Common myeloid progenitor, CD34-positive (primary cell): ENCODE measurements at regions of chr1 and their contacts with region 1.

Region 1: GRCh38 chr1:87292684-87293493 is 35.8 kb upstream of the LMO4 start:
- DNase-seq: peak; percentile 78 to 90 (median 85)
- H3K4me3 ChIP-seq: no peak overlapping the region
- H3K27ac ChIP-seq: no peak overlapping the region
- H3K4me1 ChIP-seq: no peaks in the 10 kb centered on the region
- H3K27me3 ChIP-seq: no peaks in the 10 kb centered on the region

Region 2: DNA sequence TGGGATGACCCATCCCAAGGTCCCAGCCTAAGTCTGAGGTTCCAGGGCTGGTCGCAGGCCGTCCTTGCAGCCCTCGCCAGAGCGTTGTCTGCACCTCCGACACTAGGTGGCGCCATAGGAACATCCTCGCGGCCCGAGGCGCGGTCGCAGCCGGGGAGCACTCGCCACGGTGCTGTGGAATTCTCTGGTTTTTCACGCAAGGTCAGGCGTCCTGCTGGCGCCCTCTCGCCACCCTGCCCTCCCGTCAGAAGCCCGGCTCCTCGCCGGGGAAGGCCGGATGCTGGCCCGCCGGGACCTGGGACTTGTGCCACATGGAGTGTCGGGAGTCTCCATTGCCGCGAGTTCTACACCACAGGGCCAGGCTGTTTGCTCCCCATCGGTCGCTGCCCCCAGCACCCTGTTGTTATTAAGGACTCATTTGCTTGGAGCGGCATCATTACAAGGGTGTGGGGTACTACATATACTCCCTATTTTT is 161.0 kb before region 1 on chr1:
- CTCF ChIA-PET with region 1: interaction called, 12 read pairs
- POLR2A ChIA-PET with region 1: no interaction called
- DNase-seq: peak; percentile 65 to 83 (median 81)
- H3K4me3 ChIP-seq: peak overlapping the region; percentile 36 to 86 (median 67)
- H3K27ac ChIP-seq: no peak overlapping the region
- H3K4me1 ChIP-seq: peaks cover 0 to 21% (median 12%) of the 10 kb centered on the region in 4 experiments
- H3K27me3 ChIP-seq: peaks cover 0 to 3% (median 0%) of the 10 kb centered on the region in 5 experiments

Region 3: DNA sequence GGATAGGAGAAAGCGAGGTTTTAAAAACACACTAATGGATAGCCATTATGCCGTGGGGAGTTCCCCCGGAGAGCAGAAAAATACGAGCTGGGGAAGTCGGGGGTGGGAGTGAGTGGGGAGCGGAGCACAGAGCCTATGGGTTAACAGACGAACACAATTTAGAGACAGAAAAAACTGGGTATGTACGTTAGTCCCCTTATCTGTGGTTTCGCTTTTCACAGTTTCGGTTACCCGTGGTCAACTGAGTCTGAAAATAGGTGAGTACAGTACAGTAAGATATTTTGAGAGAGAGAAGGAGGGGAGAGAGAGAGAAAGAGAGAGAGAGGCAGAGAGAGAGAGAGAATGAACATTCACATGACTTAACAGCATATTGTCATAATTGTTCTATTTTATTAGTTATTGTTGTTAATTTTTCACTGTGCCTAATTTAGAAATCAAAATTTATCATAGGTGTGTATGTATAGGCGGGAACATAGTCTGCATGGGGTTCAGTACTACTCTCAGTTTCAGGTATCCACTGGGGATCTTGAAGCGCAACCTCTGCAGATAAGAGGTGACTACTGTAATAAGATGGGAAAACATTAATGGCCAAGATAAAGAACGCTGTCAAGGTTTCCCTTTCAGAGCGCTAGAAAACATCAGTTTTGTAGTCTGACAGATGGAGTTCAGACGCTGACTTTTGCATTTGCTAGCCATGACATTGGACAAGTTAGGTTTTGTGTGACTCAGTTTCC is 89.8 kb before region 1 on chr1:
- CTCF ChIA-PET with region 1: no interaction called
- POLR2A ChIA-PET with region 1: no interaction called
- DNase-seq: peak in 2 of 3 donors; percentile 45 to 65
- H3K4me3 ChIP-seq: peak overlapping the region in 4 of 7 experiments; percentile 24 to 73 (median 56)
- H3K27ac ChIP-seq: no peak overlapping the region
- H3K4me1 ChIP-seq: peaks cover 15 to 39% (median 21%) of the 10 kb centered on the region in 4 experiments
- H3K27me3 ChIP-seq: peaks cover 0 to 37% (median 9%) of the 10 kb centered on the region in 5 experiments

Region 4: DNA sequence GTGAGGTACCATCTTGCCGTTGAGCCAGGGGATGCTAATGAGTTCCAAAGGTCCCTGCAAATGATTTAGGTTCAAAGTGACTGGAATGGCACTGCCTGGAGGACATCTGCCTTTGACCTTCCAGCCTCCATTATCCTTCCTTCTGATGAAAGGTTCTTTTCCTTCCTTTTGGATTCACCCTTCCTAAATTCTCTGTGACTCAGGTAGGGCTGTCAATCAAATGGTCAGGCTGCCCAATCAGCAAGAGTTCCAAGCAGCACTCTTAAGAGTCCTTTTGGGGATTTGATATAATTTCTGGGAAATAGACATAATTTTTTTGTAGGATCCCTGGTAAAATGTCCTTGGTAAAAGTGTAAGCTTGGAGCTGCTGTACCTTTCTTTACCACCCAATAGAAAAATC is 23.0 kb before region 1 on chr1:
- CTCF ChIA-PET with region 1: no interaction called
- POLR2A ChIA-PET with region 1: no interaction called
- DNase-seq: no peak
- H3K4me3 ChIP-seq: no peak overlapping the region
- H3K27ac ChIP-seq: no peak overlapping the region
- H3K4me1 ChIP-seq: no peaks in the 10 kb centered on the region
- H3K27me3 ChIP-seq: no peaks in the 10 kb centered on the region

Region 5: GRCh38 chr1:87358219-87358618 is 65.3 kb after region 1 on chr1:
- CTCF ChIA-PET with region 1: no interaction called
- POLR2A ChIA-PET with region 1: no interaction called
- DNase-seq: no peak
- H3K4me3 ChIP-seq: no peak overlapping the region
- H3K27ac ChIP-seq: no peak overlapping the region
- H3K4me1 ChIP-seq: no peaks in the 10 kb centered on the region
- H3K27me3 ChIP-seq: no peaks in the 10 kb centered on the region

Region 6: DNA sequence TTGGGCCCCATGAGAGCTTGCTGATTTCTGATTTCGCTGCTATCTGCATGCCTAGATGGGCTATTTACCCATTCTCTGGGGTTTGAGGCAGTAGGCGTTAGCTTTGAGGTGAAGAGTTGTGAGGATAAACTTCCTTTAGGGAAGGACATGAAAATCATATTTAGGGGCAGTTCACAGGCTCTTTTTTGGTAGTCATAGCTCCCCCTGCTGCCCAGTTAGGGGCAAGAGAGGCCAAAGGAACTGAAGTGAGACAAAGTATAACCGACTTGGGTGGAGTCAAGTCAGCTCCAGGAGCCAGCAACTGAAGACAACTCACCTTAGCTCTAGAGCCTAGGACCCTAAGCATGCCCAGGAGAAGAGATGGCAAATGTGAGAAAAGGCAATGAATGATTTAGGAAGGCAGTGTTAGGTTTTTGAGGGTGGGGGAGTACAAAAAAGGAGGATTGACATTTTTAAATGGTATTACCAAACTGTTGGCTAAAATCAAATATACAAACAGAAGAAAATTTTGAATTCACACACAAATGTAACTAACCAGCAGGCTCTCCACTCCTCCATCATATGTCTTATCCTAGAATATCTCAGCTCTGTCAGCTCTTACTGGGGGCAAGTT is 660.9 kb after region 1 on chr1:
- CTCF ChIA-PET with region 1: interaction called, 21 read pairs
- POLR2A ChIA-PET with region 1: no interaction called
- DNase-seq: peak; percentile 77 to 82 (median 78)
- H3K4me3 ChIP-seq: no peak overlapping the region
- H3K27ac ChIP-seq: no peak overlapping the region
- H3K4me1 ChIP-seq: peaks cover 0 to 24% (median 13%) of the 10 kb centered on the region in 4 experiments
- H3K27me3 ChIP-seq: no peaks in the 10 kb centered on the region

Region 7: GRCh38 chr1:88061492-88062177 is 768.7 kb after region 1 on chr1:
- CTCF ChIA-PET with region 1: interaction called, 10 read pairs
- POLR2A ChIA-PET with region 1: no interaction called
- DNase-seq: peak; percentile 68 to 84 (median 81)
- H3K4me3 ChIP-seq: no peak overlapping the region
- H3K27ac ChIP-seq: no peak overlapping the region
- H3K4me1 ChIP-seq: peaks cover 0 to 14% (median 6%) of the 10 kb centered on the region in 4 experiments
- H3K27me3 ChIP-seq: no peaks in the 10 kb centered on the region

Region 8: GRCh38 chr1:88302843-88303486 is 1010.1 kb after region 1 on chr1:
- CTCF ChIA-PET with region 1: interaction called, 19 read pairs
- POLR2A ChIA-PET with region 1: no interaction called
- DNase-seq: peak; percentile 45 to 72 (median 60)
- H3K4me3 ChIP-seq: no peak overlapping the region
- H3K27ac ChIP-seq: no peak overlapping the region
- H3K4me1 ChIP-seq: peaks cover 0 to 3% (median 0%) of the 10 kb centered on the region in 4 experiments
- H3K27me3 ChIP-seq: peaks cover 0 to 2% (median 0%) of the 10 kb centered on the region in 5 experiments